Left cardiac atrium (tissue), 4 donors: ENCODE measurements at regions of chr18 and their contacts with region 1.

Region 1: DNA sequence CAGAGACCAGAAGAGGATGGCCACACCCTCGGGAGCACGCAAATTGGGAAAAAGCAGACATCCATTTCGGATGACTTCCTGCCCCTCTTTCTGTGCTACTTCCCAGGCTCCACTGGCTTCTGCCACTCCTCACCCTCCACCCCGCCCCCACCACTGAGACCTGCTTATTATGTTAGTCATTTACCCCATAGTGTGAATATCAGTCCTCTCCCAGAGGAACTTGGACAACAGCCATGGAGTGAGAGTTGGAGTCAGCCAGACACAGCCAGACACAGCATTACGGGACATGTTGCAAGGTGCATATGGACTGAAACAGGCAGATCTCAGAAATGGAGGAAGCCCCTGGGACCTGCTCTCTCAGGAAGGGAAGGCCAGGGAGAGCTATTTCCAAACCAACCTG is 51.8 kb downstream of the CTIF start:
- DNase-seq: peak; percentile 47
- ATAC-seq: peak; percentile 28 to 72

Region 2: GRCh38 chr18:48545757-48546321 is 44.8 kb before region 1 on chr18:
- intact Hi-C with region 1: loop called in 1 of 2 experiments (anchors 5 kb)
- DNase-seq: peak; percentile 71
- ATAC-seq: peak; percentile 21 to 36